HepG2 (cell line): ENCODE measurements at regions of chr14 and their contacts with region 1.

Region 1: DNA sequence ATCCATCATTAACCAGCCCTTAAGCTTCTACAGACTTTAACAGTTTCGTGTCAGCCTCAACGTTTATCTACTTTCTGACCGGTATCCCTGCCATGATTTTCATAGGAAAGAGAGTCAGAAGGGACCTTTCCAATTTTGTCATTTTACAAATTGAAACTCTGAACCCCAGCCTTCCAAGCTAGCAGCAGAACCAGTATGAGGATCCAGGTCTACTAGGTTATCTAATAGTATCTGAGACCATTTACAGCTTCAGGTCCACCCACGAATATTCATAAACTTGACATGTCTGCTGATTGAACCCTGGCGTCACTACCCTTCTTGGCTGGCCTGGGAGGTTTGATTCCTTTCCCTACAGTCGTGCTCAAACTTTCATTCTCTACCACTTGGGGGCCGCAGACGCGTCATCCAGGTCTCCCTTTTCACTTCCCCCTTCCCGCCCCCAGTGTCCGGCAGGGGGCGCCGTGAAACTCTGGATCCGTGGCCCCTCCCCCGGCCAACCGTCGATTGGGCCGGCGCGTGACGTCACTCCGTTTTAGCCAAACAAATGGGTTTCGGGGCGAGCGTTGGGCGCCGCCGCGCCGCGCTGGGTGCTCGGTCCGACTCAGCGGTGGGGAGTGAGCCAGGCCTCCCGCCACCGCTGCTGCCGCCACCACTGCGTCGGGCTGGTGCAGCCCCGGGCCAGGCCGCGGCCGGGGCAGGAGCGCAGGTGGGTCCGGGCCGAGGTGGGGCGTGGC is at the start of gene FBXO34:
- DNase-seq: peak; percentile 94
- ATAC-seq: peak; percentile 95
- H3K4me3 ChIP-seq: peak within 1 kb of the TSS; percentile 87 to 99 (median 97)
- H3K27ac ChIP-seq: peak within 1 kb of the TSS; percentile 78
- H3K4me1 ChIP-seq: peaks cover 40% of the 10 kb centered on the region
- H3K27me3 ChIP-seq: no peaks in the 10 kb centered on the region; a peak in 1 of 5 replicates
- CTCF ChIP-seq: peak; percentile 99
- EP300 ChIP-seq: no peak
- POLR2A ChIP-seq: peak; percentile 71 to 87
- RAD21 ChIP-seq: peak; percentile 90
- total RNA-seq, gene FBXO34: 13.5 and 15.5 TPM in 2 replicates

Region 2: GRCh38 chr14:55212634-55213033 is 58.4 kb before region 1 on chr14:
- CTCF ChIA-PET with region 1: no interaction called
- POLR2A ChIA-PET with region 1: no interaction called
- in situ Hi-C with region 1: no loop called
- intact Hi-C with region 1: no loop called
- DNase-seq: no peak
- ATAC-seq: no peak
- H3K4me3 ChIP-seq: no peak overlapping the region
- H3K27ac ChIP-seq: no peak overlapping the region
- H3K4me1 ChIP-seq: peaks cover 4% of the 10 kb centered on the region
- H3K27me3 ChIP-seq: no peaks in the 10 kb centered on the region
- CTCF ChIP-seq: no peak
- EP300 ChIP-seq: no peak
- POLR2A ChIP-seq: no peak
- RAD21 ChIP-seq: no peak

Region 3: GRCh38 chr14:55285048-55285652 is 14.2 kb after region 1 on chr14:
- CTCF ChIA-PET with region 1: no interaction called
- POLR2A ChIA-PET with region 1: no interaction called
- in situ Hi-C with region 1: no loop called
- intact Hi-C with region 1: no loop called
- DNase-seq: no peak
- ATAC-seq: no peak
- H3K4me3 ChIP-seq: no peak overlapping the region
- H3K27ac ChIP-seq: no peak overlapping the region
- H3K4me1 ChIP-seq: no peaks in the 10 kb centered on the region
- H3K27me3 ChIP-seq: no peaks in the 10 kb centered on the region
- CTCF ChIP-seq: no peak
- EP300 ChIP-seq: no peak
- POLR2A ChIP-seq: no peak
- RAD21 ChIP-seq: no peak

Region 4: DNA sequence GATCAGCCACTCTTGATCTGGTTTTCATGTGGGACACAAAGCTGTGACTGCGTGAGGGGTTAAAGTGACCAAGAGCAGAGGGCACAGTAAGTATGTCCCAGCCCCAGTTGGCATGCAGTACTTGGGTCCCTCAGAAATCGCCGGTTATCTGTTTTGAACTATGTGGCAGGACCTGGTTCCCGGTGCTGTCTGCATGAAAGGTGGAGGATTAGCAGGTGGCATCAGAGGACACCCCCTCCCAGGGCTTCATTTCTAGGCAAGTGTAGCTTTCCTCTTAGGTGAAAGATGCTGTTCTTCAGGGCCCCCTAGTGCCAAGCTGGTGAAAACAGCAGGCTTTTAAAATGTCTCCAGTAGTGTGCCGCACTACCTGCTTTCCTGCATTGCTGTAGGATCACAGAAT is 83.5 kb after region 1 on chr14:
- CTCF ChIA-PET with region 1: interaction called, 14 read pairs
- POLR2A ChIA-PET with region 1: no interaction called
- in situ Hi-C with region 1: no loop called
- intact Hi-C with region 1: loop called (anchors 1 kb)
- DNase-seq: peak; percentile 41
- ATAC-seq: peak; percentile 84
- H3K4me3 ChIP-seq: no peak overlapping the region
- H3K27ac ChIP-seq: no peak overlapping the region
- H3K4me1 ChIP-seq: peaks cover 16% of the 10 kb centered on the region
- H3K27me3 ChIP-seq: no peaks in the 10 kb centered on the region
- CTCF ChIP-seq: peak; percentile 64
- EP300 ChIP-seq: no peak
- POLR2A ChIP-seq: no peak
- RAD21 ChIP-seq: peak; percentile 57; the same call in 1 of the 2 replicates

Region 5: GRCh38 chr14:55411426-55412389 is 140.7 kb after region 1 on chr14 and contains the start of gene ATG14:
- CTCF ChIA-PET with region 1: interaction called, 3 read pairs
- POLR2A ChIA-PET with region 1: no interaction called
- in situ Hi-C with region 1: loop called (anchors 5 kb)
- intact Hi-C with region 1: no loop called
- DNase-seq: peak; percentile 82
- ATAC-seq: peak; percentile 99
- H3K4me3 ChIP-seq: peak within 1 kb of the TSS; percentile 92 to 97 (median 96)
- H3K27ac ChIP-seq: peak within 1 kb of the TSS; percentile 74
- H3K4me1 ChIP-seq: peaks cover 28% of the 10 kb centered on the region
- H3K27me3 ChIP-seq: no peaks in the 10 kb centered on the region; a peak in 2 of 5 replicates
- CTCF ChIP-seq: peak; percentile 11; the same call in 1 of the 2 replicates
- EP300 ChIP-seq: no peak
- POLR2A ChIP-seq: peak; percentile 70 to 82
- RAD21 ChIP-seq: peak; percentile 25; the same call in 1 of the 2 replicates
- total RNA-seq, gene ATG14: 9.1 and 9.9 TPM in 2 replicates

Region 6: GRCh38 chr14:55579724-55580469 is 308.9 kb after region 1 on chr14 and contains the start of gene KTN1:
- CTCF ChIA-PET with region 1: no interaction called
- POLR2A ChIA-PET with region 1: no interaction called
- in situ Hi-C with region 1: no loop called
- intact Hi-C with region 1: loop called (anchors 10 kb)
- DNase-seq: peak; percentile 50
- ATAC-seq: peak; percentile 91
- H3K4me3 ChIP-seq: peak within 1 kb of the TSS; percentile 92 to 98 (median 98)
- H3K27ac ChIP-seq: peak within 1 kb of the TSS; percentile 90
- H3K4me1 ChIP-seq: peaks cover 53% of the 10 kb centered on the region
- H3K27me3 ChIP-seq: no peaks in the 10 kb centered on the region; a peak in 1 of 5 replicates
- CTCF ChIP-seq: no peak
- EP300 ChIP-seq: no peak
- POLR2A ChIP-seq: peak; percentile 50 to 61; a peak in 1 of 4 replicates
- RAD21 ChIP-seq: peak; percentile 48
- total RNA-seq, gene KTN1: 138 and 169 TPM in 2 replicates